ENCODE measurements at regions of chr7 and their contacts with region 1.

Region 1: DNA sequence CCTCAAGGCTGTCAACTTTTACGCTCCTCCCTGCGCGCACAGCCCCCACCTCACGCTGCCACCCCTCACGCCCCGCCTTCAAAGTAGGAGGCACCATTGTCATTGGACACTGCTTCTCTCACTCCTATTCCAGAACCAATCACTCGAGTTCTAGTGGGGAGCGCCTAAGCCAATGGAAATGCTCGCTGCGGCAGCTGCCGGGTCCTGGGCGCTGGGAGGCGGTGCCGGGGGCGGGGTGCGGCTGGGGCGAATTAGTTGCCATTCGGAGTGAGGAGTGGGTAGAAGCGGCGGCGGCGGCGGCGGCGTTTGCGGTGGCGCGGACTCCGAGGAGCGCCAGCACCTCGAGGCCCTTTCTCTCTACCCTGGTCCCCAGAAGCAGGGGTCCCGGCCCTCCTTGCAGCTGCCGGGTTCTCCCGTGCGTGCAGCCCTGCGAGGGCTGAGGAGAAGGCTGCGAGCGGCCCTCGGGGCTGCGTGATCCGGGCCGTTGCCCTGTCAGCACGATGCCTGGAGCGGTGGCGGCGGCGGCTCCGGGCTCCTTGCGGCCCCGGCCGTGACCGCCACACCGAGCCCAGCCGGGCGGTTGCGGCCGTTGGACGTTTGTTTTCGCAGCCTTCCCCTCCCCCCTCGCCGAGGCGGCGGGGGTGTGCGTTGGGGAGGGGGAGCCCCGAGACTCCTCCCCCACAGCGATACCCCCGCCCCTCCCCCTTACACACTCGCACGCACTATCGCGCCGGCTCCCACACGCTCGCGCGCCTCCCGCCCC is at the start of gene GLCCI1:
- DNase-seq: peak; percentile 95 to 99
- H3K4me3 ChIP-seq: peak within 1 kb of the TSS; percentile 99
- H3K27ac ChIP-seq: peak within 1 kb of the TSS; percentile 78
- H3K4me1 ChIP-seq: peaks cover 40% of the 10 kb centered on the region
- H3K27me3 ChIP-seq: no peaks in the 10 kb centered on the region
- CTCF ChIP-seq: no peak
- total RNA-seq, gene GLCCI1: 34.3 and 42.1 TPM in 2 replicates

Region 2: GRCh38 chr7:7681179-7681935 is 287.4 kb before region 1 on chr7:
- CTCF ChIA-PET with region 1: interaction called, 3 read pairs
- POLR2A ChIA-PET with region 1: interaction called, 3 read pairs
- intact Hi-C with region 1: loop called (anchors 5 kb)
- DNase-seq: peak; percentile 29 to 82
- H3K4me3 ChIP-seq: peak overlapping the region; percentile 11; the same call in 1 of the 2 replicates
- H3K27ac ChIP-seq: peak overlapping the region; percentile 38
- H3K4me1 ChIP-seq: peaks cover 28% of the 10 kb centered on the region
- H3K27me3 ChIP-seq: no peaks in the 10 kb centered on the region
- CTCF ChIP-seq: peak; percentile 84

Region 3: DNA sequence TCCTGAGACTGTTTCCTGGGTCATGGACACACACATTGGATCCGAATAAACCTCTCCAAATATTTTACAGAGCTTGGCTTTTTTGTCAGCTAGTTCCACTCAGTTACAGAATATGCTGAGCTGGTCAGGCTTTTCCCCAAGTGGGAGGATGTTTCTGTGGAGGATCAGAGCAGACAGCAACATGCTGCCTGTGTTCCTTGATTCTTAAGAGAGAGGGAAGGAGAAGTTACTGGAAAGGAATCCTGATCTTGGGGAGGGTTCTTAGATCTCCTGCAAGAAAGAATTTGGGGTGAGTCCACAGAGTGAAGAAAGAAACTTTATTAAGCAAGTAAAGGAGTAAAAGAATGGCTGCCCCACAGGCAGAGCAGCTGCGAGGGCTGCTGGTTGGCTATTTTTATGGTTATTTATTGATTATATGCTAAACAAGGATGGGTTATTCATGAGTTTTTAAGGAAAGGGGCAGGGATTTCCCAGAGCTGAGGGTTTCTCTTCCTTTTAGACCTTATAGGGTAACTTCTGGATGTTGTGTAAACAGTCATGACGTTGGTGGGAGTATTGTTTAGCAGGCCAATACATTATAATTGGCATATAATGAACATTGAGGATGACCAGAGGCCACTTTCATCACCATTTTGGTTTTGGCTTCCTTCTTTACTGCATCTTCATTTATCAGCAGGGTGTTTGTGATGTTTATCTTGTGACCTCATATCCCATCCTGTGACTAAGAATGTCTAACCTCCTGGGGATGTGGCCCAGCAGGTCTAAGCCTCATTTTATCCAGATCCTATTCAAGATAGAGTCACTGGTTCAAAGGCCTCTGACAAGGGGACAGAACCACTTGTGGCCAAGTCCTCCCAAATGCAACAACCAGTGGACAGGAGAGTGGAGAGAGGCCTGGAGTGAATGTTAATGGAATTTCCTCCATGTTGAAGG is 173.3 kb before region 1 on chr7:
- CTCF ChIA-PET with region 1: no interaction called
- POLR2A ChIA-PET with region 1: interaction called, 4 read pairs
- intact Hi-C with region 1: loop called (anchors 2 kb)
- DNase-seq: peak; percentile 74 to 98
- H3K4me3 ChIP-seq: no peak overlapping the region
- H3K27ac ChIP-seq: peak overlapping the region; percentile 81
- H3K4me1 ChIP-seq: peaks cover 44% of the 10 kb centered on the region
- H3K27me3 ChIP-seq: no peaks in the 10 kb centered on the region
- CTCF ChIP-seq: no peak

Region 4: GRCh38 chr7:7996576-7996975 is 27.9 kb after region 1 on chr7:
- CTCF ChIA-PET with region 1: no interaction called
- POLR2A ChIA-PET with region 1: no interaction called
- intact Hi-C with region 1: loop called (anchors 2 kb)
- DNase-seq: peak; percentile 63 to 97
- H3K4me3 ChIP-seq: peak overlapping the region; percentile 22; the same call in 1 of the 2 replicates
- H3K27ac ChIP-seq: peak overlapping the region; percentile 66
- H3K4me1 ChIP-seq: peaks cover 21% of the 10 kb centered on the region
- H3K27me3 ChIP-seq: no peaks in the 10 kb centered on the region
- CTCF ChIP-seq: no peak

Region 5: DNA sequence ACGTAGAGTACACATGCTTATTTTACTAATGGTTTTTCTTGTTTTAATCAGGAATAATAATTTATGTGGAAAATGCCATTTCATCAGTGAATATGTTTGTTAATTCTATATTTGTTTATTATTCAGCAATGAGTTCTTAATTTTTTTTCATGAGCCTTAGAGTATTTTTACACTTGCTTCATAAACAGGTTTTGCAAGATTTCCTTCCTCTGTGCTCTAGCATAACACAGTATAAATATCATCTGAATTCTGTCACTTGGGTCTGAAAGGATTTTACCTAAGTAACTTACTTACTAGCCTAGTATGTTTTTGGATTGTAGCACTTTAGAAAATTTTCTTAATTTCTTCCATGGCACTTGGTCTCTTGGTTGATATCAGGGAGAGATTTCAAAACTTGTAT is 45.7 kb after region 1 on chr7:
- CTCF ChIA-PET with region 1: no interaction called
- POLR2A ChIA-PET with region 1: no interaction called
- intact Hi-C with region 1: no loop called
- DNase-seq: peak in 1 of 2 experiments; percentile 65
- H3K4me3 ChIP-seq: no peak overlapping the region
- H3K27ac ChIP-seq: 0 out of 2 replicates have a peak overlapping the region, but pooled peaks have one; percentile 17
- H3K4me1 ChIP-seq: peaks cover 21% of the 10 kb centered on the region
- H3K27me3 ChIP-seq: no peaks in the 10 kb centered on the region
- CTCF ChIP-seq: no peak

Region 6: GRCh38 chr7:8261711-8262695 is 293.3 kb after region 1 on chr7 and contains the start of gene ICA1:
- CTCF ChIA-PET with region 1: no interaction called
- POLR2A ChIA-PET with region 1: no interaction called
- intact Hi-C with region 1: loop called (anchors 1 kb)
- DNase-seq: peak; percentile 72 to 89
- H3K4me3 ChIP-seq: peak within 1 kb of the TSS; percentile 99
- H3K27ac ChIP-seq: peak within 1 kb of the TSS; percentile 71
- H3K4me1 ChIP-seq: peaks cover 7% of the 10 kb centered on the region
- H3K27me3 ChIP-seq: no peaks in the 10 kb centered on the region
- CTCF ChIP-seq: no peak
- total RNA-seq, gene ICA1: 33.8 and 58.6 TPM in 2 replicates

Region 7: DNA sequence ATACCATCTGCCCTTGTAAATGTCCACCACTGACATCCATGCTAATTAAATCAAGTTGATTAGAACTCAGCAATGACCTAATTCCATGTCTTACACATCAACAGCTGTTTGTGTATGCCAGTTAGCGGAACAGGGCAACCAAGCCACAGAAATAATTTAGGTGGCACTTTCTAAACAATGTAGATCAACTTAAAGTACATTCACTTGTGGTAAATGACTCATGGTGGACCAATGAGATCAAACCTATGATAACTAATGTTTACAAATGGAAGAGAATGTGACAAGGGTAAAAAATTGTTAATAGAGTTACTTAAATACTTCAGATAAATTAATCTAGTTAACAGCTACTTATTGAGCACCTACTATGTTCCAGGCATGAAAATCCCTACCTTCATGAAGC is 356.3 kb after region 1 on chr7:
- CTCF ChIA-PET with region 1: no interaction called
- POLR2A ChIA-PET with region 1: no interaction called
- intact Hi-C with region 1: no loop called
- DNase-seq: peak in 1 of 2 experiments; percentile 80
- H3K4me3 ChIP-seq: no peak overlapping the region
- H3K27ac ChIP-seq: no peak overlapping the region
- H3K4me1 ChIP-seq: 0 out of 2 replicates have a peak, but pooled peaks cover 5% of the 10 kb centered on the region
- H3K27me3 ChIP-seq: peaks cover 7% of the 10 kb centered on the region
- CTCF ChIP-seq: no peak

Region 8: GRCh38 chr7:8338206-8338605 is 369.5 kb after region 1 on chr7:
- CTCF ChIA-PET with region 1: no interaction called
- POLR2A ChIA-PET with region 1: no interaction called
- intact Hi-C with region 1: no loop called
- DNase-seq: no peak
- H3K4me3 ChIP-seq: no peak overlapping the region
- H3K27ac ChIP-seq: no peak overlapping the region
- H3K4me1 ChIP-seq: no peaks in the 10 kb centered on the region
- H3K27me3 ChIP-seq: no peaks in the 10 kb centered on the region
- CTCF ChIP-seq: no peak

Region 9: DNA sequence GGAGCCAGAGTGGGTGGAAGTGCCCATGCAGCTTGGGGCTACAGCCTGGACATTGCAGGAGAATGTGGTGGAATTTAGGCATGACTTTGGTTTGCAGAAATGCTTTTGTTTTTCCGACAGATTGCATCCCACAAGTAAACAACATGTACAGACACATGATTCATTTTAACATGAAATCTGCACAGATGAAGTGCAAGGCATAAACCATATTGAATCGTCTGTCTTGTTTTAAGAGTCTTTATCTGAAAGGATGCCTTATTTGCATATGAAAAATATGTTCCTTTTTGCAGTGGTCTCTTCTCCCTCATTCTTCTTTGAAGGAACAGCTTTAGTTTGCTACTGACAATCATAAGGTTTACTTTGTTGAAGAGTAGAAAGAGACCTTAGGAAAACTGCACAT is 559.6 kb after region 1 on chr7:
- CTCF ChIA-PET with region 1: no interaction called
- POLR2A ChIA-PET with region 1: no interaction called
- intact Hi-C with region 1: no loop called
- DNase-seq: no peak
- H3K4me3 ChIP-seq: no peak overlapping the region
- H3K27ac ChIP-seq: no peak overlapping the region
- H3K4me1 ChIP-seq: no peaks in the 10 kb centered on the region
- H3K27me3 ChIP-seq: peaks cover 6% of the 10 kb centered on the region; the same call in 1 of the 2 replicates
- CTCF ChIP-seq: no peak